Posterior cingulate gyrus (tissue), 11 donors: ENCODE measurements at regions of chr4 and their contacts with region 1.

Region 1: DNA sequence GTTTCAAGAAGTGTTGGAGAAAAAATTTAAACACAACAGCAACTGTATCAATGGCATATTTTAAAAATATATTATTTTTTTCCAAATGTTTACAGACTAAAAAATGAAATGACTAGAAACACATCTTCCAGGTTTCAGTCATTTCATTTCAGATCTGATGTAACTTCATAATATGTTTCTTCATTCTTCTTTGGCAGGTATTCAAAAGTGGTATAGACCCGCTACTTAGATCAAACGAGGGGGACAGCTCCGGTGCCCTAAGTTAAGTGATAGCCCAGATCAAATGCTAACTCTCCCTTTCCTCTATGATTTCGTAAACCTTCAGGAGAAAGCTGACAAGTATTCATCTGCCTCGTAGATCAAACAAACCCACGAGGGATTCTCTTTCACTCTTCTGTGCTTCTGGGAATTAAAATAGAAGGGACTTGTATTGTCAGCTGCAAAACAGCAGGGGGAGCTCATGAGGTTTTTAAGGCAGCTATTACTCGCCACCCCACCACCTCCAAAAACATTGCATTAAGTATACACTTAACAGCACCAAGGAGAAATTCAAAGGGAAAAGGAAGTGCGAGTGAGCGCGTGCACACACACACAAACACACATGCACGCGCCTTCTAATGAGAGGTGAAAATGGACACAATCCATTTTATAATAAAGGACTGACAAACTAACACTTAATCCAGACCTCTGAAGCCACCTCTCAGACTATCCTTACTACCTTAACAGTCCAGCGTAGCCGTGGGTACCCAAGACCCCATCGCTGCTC is 21.4 kb downstream of the HELT start:
- DNase-seq: peak in 3 of 10 donors; percentile 35 to 81 (median 48)

Region 2: DNA sequence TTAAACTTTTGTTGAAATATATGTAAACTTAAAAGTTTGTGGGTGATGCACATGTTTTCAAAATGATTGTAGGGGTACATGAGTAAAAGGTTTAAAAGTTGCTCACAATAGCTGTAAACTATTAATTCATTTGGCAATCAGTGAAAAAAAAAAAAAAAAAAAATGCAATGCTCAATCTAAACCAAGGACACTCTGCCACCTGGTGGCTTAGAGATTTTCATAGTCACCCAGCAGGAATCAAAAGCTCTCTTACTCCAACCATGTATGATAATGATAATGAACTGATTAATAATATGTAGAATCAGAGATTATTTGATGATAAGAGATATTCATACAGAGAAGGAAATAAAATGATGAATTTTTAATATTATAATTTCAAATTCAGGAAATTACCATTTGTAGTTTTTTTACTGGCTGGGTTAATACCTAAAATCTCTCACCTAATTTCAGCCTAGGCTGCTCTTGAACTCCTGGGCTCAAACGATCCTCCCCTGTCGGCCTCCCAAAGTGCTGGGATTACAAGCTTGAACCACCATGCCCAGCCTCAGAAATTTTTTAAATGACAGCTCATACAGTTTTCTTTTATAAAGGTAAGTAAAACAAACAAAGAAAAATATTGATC is 56.5 kb after region 1 on chr4:
- intact Hi-C with region 1: loop called (anchors 2 kb)
- DNase-seq: peak in 3 of 10 donors; percentile 14 to 23 (median 15)

Region 3: DNA sequence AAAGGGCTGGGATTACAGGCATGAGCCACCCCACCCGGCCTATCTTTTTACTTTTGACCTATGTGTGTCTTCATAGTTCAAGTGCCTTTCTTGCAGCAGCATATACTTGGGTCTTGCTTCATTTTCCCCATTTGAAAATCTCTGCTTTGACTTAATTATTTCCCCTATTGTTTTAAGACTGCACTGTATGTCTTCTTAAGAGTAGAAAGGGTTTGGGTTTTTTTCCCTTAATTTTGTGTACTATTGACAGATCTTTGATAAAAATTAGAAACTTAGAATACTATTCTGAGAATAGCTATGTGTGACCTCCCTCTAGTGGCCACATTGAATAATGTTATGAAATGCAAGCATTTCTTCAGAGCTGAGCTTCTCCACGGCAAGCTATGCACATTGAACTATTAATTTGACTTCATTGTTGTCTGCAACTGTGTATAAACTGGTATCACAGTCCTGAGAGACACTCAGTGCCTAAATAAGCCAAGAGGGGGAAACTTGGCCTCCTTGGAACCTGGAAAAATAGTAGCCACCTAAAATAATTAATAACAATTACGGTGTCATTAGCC is 94.7 kb after region 1 on chr4:
- intact Hi-C with region 1: loop called (anchors 1 kb)
- DNase-seq: no peak

Region 4: DNA sequence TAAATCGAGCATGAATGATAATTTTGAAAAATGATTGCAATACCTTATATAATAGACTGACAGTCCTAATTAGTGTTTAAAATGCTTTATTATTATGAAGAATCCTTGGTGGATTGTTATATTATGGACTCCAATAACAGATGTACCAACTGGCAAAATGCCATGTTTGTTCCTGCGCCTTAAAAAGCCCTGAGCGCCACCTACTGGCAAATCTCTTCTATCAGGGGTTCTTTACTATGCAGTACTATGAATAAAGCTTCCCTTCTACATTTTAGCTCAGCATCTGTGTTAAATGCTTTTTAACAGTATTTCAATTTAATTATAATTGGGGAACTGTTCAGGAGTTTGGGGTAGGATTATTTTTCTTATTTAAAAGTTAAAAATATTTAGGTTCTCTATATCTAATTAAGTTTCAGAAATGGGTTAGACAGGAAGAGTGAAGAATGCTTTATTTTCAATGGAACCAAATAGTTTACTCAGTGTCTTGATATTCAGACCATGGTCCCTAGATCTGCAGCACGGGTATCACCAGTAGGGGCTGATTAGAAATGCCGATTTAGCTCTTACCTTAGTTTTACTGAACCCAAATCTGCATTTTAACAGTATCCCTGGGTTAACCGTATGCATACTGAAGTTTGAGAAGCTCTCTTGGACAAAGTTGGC is 144.1 kb after region 1 on chr4:
- intact Hi-C with region 1: loop called (anchors 10 kb)
- DNase-seq: peak in 7 of 10 donors; percentile 66 to 92 (median 81)

Region 5: DNA sequence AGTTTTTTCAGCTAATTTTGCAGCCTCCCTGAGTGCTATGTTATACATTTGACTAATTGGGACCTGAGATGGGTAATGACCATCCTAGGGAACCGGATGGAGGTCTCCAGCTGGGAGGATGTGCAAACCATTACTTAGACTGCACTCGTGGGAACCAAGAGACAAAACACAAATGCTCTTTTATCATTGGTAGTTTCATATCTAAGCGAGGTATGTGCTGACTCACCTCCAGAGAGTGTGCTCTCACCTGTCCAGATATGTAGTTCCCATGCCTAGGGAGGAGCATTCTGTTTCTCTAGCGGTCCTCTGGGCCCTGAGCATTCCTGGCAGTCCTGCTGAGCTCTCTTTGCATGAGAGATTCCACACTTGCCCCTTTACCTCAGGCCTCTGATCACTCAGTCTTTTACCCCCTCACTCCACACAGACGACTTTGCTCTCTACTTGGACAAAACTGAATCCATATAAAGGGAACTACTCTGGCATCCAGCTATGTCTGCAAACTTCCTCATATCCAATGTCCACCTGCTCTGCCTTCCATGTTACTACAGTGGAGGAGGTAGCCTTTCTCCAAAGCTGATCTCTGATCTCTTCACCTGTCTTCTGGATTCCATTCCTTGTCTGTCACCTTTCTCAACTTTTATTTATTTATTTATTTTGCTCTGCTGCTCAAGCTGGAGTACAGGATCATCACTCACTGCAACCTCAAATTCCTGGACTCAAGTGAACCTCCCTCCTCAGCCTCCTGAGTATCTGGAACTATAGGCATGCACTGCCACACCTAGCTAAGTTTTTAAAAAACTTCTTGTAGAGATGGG is 267.7 kb after region 1 on chr4:
- intact Hi-C with region 1: no loop called
- DNase-seq: no peak

Region 6: GRCh38 chr4:185597532-185598188 is 558.0 kb after region 1 on chr4:
- intact Hi-C with region 1: no loop called
- DNase-seq: peak; percentile 43 to 95 (median 79)